Transverse colon (tissue), 4 donors: ENCODE measurements at regions of chr4 and their contacts with region 1.

Region 1: DNA sequence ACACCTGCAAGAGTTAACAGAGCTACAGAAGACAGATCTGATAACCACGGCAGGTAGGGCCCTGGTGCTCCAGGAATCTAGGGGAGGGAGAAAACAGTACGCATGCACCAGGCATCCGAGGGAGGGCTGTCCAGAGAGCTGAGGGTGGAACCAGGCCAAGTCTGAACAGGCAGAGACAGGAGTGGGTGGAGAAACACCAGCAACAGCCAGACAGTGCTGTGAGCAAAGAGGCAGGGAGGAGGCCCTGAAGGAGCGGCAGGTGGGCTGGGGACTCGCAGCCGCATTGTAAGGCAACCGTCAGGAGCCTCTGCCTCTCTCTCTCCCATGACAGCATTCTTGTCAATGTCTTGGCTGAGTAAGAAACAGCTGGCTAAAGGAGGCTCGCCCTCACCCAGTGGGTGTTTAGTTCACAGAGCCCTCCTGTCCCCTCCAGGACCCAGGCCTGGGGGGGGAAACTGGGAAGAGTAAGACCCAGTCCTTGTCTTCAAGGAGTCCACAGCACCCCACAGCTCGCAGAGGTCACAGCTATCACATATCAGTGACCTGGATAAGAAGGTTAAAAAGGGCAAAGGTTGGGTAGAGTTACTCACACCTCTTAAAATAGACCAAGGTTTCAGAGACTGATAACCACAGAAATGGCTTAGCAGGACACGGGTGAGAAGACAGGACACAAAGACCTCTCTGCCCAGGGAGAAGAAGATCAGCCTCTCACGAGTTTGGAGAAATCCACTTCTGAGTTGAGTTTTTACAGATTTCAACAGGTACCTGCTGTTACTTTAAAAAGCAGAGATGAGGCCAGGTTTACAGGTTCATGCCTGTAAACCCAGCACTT is 10.5 kb downstream of the ACSL1 start:
- DNase-seq: peak; percentile 78
- H3K4me3 ChIP-seq: peak overlapping the region in 1 of 4 donors; percentile 3
- H3K27ac ChIP-seq: peak overlapping the region; percentile 26 to 75 (median 62)
- H3K4me1 ChIP-seq: peaks cover 12 to 26% (median 15%) of the 10 kb centered on the region in 4 donors
- H3K27me3 ChIP-seq: no peaks in the 10 kb centered on the region
- CTCF ChIP-seq: no peak
- EP300 ChIP-seq: no peak
- POLR2A ChIP-seq: peak; percentile 49

Region 2: GRCh38 chr4:184196862-184197331 is 618.4 kb before region 1 on chr4:
- in situ Hi-C with region 1: no loop called
- intact Hi-C with region 1: no loop called
- DNase-seq: no peak
- H3K4me3 ChIP-seq: no peak overlapping the region
- H3K27ac ChIP-seq: no peak overlapping the region
- H3K4me1 ChIP-seq: no peaks in the 10 kb centered on the region
- H3K27me3 ChIP-seq: no peaks in the 10 kb centered on the region
- CTCF ChIP-seq: no peak
- EP300 ChIP-seq: no peak
- POLR2A ChIP-seq: no peak

Region 3: DNA sequence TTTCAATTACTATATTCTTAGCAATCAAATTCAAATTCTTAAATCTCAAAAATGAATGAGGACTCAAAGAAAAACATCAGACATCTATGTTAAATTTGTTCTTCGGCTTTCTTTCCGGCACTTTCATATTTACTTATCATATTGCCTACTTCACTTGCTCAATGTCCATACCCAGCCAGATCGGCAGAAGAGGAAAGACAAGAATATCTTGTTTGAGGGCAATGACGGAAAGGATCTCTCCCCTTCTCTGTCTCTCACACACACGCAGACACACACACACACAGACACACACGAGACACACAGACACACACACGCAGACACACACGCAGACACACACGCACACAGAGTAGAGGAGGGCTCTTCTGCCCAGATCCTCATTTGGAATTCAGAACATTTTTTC is 327.7 kb before region 1 on chr4:
- in situ Hi-C with region 1: no loop called
- intact Hi-C with region 1: no loop called
- DNase-seq: no peak
- H3K4me3 ChIP-seq: no peak overlapping the region
- H3K27ac ChIP-seq: no peak overlapping the region
- H3K4me1 ChIP-seq: no peaks in the 10 kb centered on the region
- H3K27me3 ChIP-seq: no peaks in the 10 kb centered on the region
- CTCF ChIP-seq: no peak
- EP300 ChIP-seq: no peak
- POLR2A ChIP-seq: no peak

Region 4: GRCh38 chr4:184762100-184762499 is 53.2 kb before region 1 on chr4:
- in situ Hi-C with region 1: no loop called
- intact Hi-C with region 1: loop called (anchors 10 kb)
- DNase-seq: no peak
- H3K4me3 ChIP-seq: no peak overlapping the region
- H3K27ac ChIP-seq: peak overlapping the region in 1 of 4 donors; percentile 43
- H3K4me1 ChIP-seq: no peaks in the 10 kb centered on the region
- H3K27me3 ChIP-seq: no peaks in the 10 kb centered on the region
- CTCF ChIP-seq: no peak
- EP300 ChIP-seq: no peak
- POLR2A ChIP-seq: no peak